CD14-positive monocyte (primary cell): ENCODE measurements at regions of chr1 and their contacts with region 1.

Region 1: GRCh38 chr1:181166377-181167196 is 78.1 kb downstream of the IER5 start:
- DNase-seq: peak; percentile 62 to 72 (median 72)
- H3K4me3 ChIP-seq: no peak overlapping the region
- H3K4me3 Mint-ChIP-seq: peak overlapping the region in 1 of 2 donors; percentile 42
- H3K27ac ChIP-seq: no peak overlapping the region
- H3K27ac Mint-ChIP-seq: peak overlapping the region in 1 of 7 donors; percentile 27
- H3K4me1 ChIP-seq: peaks cover 6 to 8% of the 10 kb centered on the region in 2 donors
- H3K4me1 Mint-ChIP-seq: peaks cover 16% of the 10 kb centered on the region
- H3K27me3 ChIP-seq: no peaks in the 10 kb centered on the region
- H3K27me3 Mint-ChIP-seq: peaks cover 0 to 6% (median 5%) of the 10 kb centered on the region in 3 donors
- CTCF ChIP-seq: peak; percentile 92

Region 2: DNA sequence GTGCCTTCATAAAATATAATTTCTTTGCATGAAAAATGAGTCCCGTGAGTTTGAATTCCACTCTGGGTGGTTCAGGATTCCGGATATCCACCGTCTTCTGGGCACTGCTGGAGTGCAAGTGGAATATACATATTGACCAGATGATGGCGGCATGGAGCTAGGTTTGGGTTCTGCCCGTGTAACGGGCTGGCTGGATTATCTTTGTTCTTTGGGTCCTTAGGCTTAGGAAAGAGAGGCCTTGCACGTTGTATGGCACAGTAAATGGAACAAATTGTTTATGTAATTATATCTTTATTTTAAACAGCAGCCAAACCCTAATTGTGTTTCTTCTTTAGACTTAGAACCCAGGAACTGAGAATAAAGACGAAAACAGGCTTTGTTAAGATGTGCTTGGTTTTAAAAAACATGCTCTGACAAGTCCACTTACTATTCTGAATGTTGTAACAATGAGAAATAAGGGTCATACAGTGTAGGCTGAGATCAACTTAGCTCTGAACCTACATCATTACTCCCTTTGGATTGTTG is 650.7 kb before region 1 on chr1:
- intact Hi-C with region 1: loop called (anchors 10 kb)
- DNase-seq: peak; percentile 48 to 67 (median 58)
- H3K4me3 ChIP-seq: no peak overlapping the region
- H3K4me3 Mint-ChIP-seq: no peak overlapping the region
- H3K27ac ChIP-seq: no peak overlapping the region
- H3K27ac Mint-ChIP-seq: no peak overlapping the region
- H3K4me1 ChIP-seq: no peaks in the 10 kb centered on the region
- H3K4me1 Mint-ChIP-seq: no peaks in the 10 kb centered on the region
- H3K27me3 ChIP-seq: no peaks in the 10 kb centered on the region
- H3K27me3 Mint-ChIP-seq: peaks cover 0 to 5% (median 4%) of the 10 kb centered on the region in 3 donors
- CTCF ChIP-seq: peak; percentile 87

Region 3: DNA sequence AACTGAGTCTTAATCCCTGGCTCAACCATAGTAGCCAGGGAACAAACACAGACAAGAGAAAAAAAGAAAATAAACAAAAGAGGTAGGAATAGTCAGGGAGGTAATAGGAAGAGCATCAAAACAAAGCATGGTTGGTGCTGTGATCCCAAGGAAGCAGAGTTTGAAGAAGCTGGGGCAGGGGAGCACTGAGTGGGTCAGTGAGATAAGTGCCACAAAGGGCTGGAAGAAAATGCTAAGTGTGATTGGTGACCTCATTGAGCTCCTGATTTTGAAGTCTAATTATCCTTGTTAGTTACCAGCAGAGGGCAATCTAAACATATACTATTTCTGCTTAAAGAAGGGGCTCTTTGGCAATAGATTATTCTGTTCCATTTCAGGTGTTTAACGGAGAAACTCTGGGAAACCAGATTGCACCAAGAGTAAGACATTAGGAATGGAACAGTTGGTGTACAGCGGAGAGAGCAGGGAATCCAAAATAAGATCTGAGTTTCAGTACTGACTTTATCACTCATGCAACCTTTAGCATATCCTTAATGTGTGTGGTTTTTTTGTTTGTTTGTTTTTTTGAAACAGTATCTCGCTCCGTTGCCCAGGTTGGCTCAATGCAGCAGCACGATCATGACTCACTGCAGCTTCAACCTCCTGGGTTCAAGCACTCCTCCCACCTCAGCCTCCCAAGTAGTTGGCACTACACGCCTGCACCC is 284.6 kb before region 1 on chr1:
- intact Hi-C with region 1: loop called (anchors 5 to 10 kb)
- DNase-seq: peak in 2 of 3 donors; percentile 6 to 13
- H3K4me3 ChIP-seq: no peak overlapping the region
- H3K4me3 Mint-ChIP-seq: no peak overlapping the region
- H3K27ac ChIP-seq: no peak overlapping the region
- H3K27ac Mint-ChIP-seq: peak overlapping the region in 1 of 7 donors; percentile 21
- H3K4me1 ChIP-seq: no peaks in the 10 kb centered on the region
- H3K4me1 Mint-ChIP-seq: no peaks in the 10 kb centered on the region
- H3K27me3 ChIP-seq: no peaks in the 10 kb centered on the region
- H3K27me3 Mint-ChIP-seq: no peaks in the 10 kb centered on the region
- CTCF ChIP-seq: peak; percentile 30

Region 4: GRCh38 chr1:181033799-181034451 is 132.7 kb before region 1 on chr1 and contains the start of gene MR1:
- intact Hi-C with region 1: loop called in 1 of 2 experiments (anchors 5 kb)
- DNase-seq: peak; percentile 86 to 92 (median 91)
- H3K4me3 ChIP-seq: peak within 1 kb of the TSS; percentile 52 to 100 (median 83)
- H3K4me3 Mint-ChIP-seq: peak within 1 kb of the TSS; percentile 86 to 96
- H3K27ac ChIP-seq: peak within 1 kb of the TSS; percentile 82 to 100
- H3K27ac Mint-ChIP-seq: peak within 1 kb of the TSS; percentile 97 to 100 (median 99)
- H3K4me1 ChIP-seq: peaks cover 46 to 58% of the 10 kb centered on the region in 2 donors
- H3K4me1 Mint-ChIP-seq: peaks cover 54% of the 10 kb centered on the region
- H3K27me3 ChIP-seq: no peaks in the 10 kb centered on the region
- H3K27me3 Mint-ChIP-seq: no peaks in the 10 kb centered on the region
- CTCF ChIP-seq: no peak
- polyA plus RNA-seq, gene MR1: 17.7 to 46.9 (median 40.9) TPM

Region 5: GRCh38 chr1:181618559-181618958 is 452.0 kb after region 1 on chr1:
- intact Hi-C with region 1: no loop called
- DNase-seq: no peak
- H3K4me3 ChIP-seq: no peak overlapping the region
- H3K4me3 Mint-ChIP-seq: no peak overlapping the region
- H3K27ac ChIP-seq: no peak overlapping the region
- H3K27ac Mint-ChIP-seq: no peak overlapping the region
- H3K4me1 ChIP-seq: no peaks in the 10 kb centered on the region
- H3K4me1 Mint-ChIP-seq: no peaks in the 10 kb centered on the region
- H3K27me3 ChIP-seq: no peaks in the 10 kb centered on the region
- H3K27me3 Mint-ChIP-seq: peaks cover 0 to 2% (median 2%) of the 10 kb centered on the region in 3 donors
- CTCF ChIP-seq: no peak